ENCODE measurements at regions of chrX and their contacts with region 1.

Region 1: GRCh38 chrX:43557792-43558191 is 98.3 kb upstream of the MAOA start:
- DNase-seq: peak; percentile 46 to 61 (median 54)
- H3K4me3 ChIP-seq: no peak overlapping the region
- H3K4me3 Mint-ChIP-seq: peak overlapping the region in 2 of 8 donors; percentile 27 to 47
- H3K27ac ChIP-seq: no peak overlapping the region
- H3K27ac Mint-ChIP-seq: no peak overlapping the region
- H3K4me1 ChIP-seq: peaks cover 4% of the 10 kb centered on the region
- H3K4me1 Mint-ChIP-seq: peaks cover 0 to 1% (median 0%) of the 10 kb centered on the region in 4 donors
- H3K27me3 ChIP-seq: no peaks in the 10 kb centered on the region
- H3K27me3 Mint-ChIP-seq: no peaks in the 10 kb centered on the region

Region 2: GRCh38 chrX:41781502-41781901 is 1776.3 kb before region 1 on chrX:
- CTCF ChIA-PET with region 1: interaction called, 12 read pairs
- POLR2A ChIA-PET with region 1: no interaction called
- intact Hi-C with region 1: loop called (anchors 1 kb)
- DNase-seq: peak in 4 of 5 donors; percentile 28 to 38 (median 32)
- H3K4me3 ChIP-seq: no peak overlapping the region
- H3K4me3 Mint-ChIP-seq: no peak overlapping the region
- H3K27ac ChIP-seq: no peak overlapping the region
- H3K27ac Mint-ChIP-seq: peak overlapping the region in 2 of 7 donors; percentile 2 to 7
- H3K4me1 ChIP-seq: peaks cover 12% of the 10 kb centered on the region
- H3K4me1 Mint-ChIP-seq: peaks cover 7 to 10% (median 8%) of the 10 kb centered on the region in 4 donors
- H3K27me3 ChIP-seq: no peaks in the 10 kb centered on the region
- H3K27me3 Mint-ChIP-seq: no peaks in the 10 kb centered on the region

Region 3: GRCh38 chrX:41796577-41796976 is 1761.2 kb before region 1 on chrX:
- CTCF ChIA-PET with region 1: interaction called, 11 read pairs
- POLR2A ChIA-PET with region 1: no interaction called
- intact Hi-C with region 1: loop called (anchors 5 kb)
- DNase-seq: peak in 3 of 5 donors; percentile 2 to 37 (median 6)
- H3K4me3 ChIP-seq: no peak overlapping the region
- H3K4me3 Mint-ChIP-seq: peak overlapping the region in 2 of 8 donors; percentile 15 to 63
- H3K27ac ChIP-seq: no peak overlapping the region
- H3K27ac Mint-ChIP-seq: peak overlapping the region in 3 of 7 donors; percentile 3 to 68 (median 5)
- H3K4me1 ChIP-seq: peaks cover 45% of the 10 kb centered on the region
- H3K4me1 Mint-ChIP-seq: peaks cover 19 to 45% (median 33%) of the 10 kb centered on the region in 4 donors
- H3K27me3 ChIP-seq: no peaks in the 10 kb centered on the region
- H3K27me3 Mint-ChIP-seq: no peaks in the 10 kb centered on the region

Region 4: GRCh38 chrX:42948723-42949657 is 608.8 kb before region 1 on chrX:
- CTCF ChIA-PET with region 1: no interaction called
- POLR2A ChIA-PET with region 1: no interaction called
- intact Hi-C with region 1: loop called (anchors 5 kb)
- DNase-seq: peak; percentile 29 to 58 (median 35)
- H3K4me3 ChIP-seq: no peak overlapping the region
- H3K4me3 Mint-ChIP-seq: peak overlapping the region; percentile 18 to 79 (median 42)
- H3K27ac ChIP-seq: peak overlapping the region; percentile 49
- H3K27ac Mint-ChIP-seq: peak overlapping the region; percentile 87 to 95 (median 90)
- H3K4me1 ChIP-seq: peaks cover 77% of the 10 kb centered on the region
- H3K4me1 Mint-ChIP-seq: peaks cover 44 to 77% (median 64%) of the 10 kb centered on the region in 4 donors
- H3K27me3 ChIP-seq: no peaks in the 10 kb centered on the region
- H3K27me3 Mint-ChIP-seq: no peaks in the 10 kb centered on the region

Region 5: GRCh38 chrX:43349363-43349762 is 208.4 kb before region 1 on chrX:
- CTCF ChIA-PET with region 1: interaction called, 8 read pairs
- POLR2A ChIA-PET with region 1: no interaction called
- intact Hi-C with region 1: loop called (anchors 5 kb)
- DNase-seq: peak; percentile 29 to 47 (median 38)
- H3K4me3 ChIP-seq: no peak overlapping the region
- H3K4me3 Mint-ChIP-seq: no peak overlapping the region
- H3K27ac ChIP-seq: no peak overlapping the region
- H3K27ac Mint-ChIP-seq: no peak overlapping the region
- H3K4me1 ChIP-seq: no peaks in the 10 kb centered on the region
- H3K4me1 Mint-ChIP-seq: peaks cover 4 to 15% (median 5%) of the 10 kb centered on the region in 4 donors
- H3K27me3 ChIP-seq: no peaks in the 10 kb centered on the region
- H3K27me3 Mint-ChIP-seq: no peaks in the 10 kb centered on the region

Region 6: DNA sequence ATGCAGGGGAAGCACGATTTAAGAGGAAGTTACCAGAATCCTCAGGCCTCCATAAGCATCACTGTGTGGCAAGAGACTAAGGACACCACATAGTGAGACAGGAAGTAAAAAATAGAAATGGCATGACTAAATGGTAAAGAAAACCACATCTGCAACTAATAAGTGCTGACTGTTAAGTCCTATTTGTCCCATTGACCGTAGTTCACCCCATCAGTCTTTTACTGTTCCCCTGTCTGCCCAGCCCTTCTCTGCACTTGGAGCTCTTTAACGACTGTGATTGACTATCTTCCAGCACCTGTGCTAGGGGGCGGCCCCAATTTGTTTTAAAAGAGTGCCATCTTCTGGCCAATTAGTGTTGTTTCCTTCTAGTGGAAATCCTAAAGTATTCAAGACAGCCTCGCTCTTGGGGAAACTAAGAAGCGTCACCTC is 192.5 kb after region 1 on chrX:
- CTCF ChIA-PET with region 1: interaction called, 15 read pairs
- POLR2A ChIA-PET with region 1: no interaction called
- intact Hi-C with region 1: loop called (anchors 1 kb)
- DNase-seq: peak; percentile 50 to 60 (median 54)
- H3K4me3 ChIP-seq: no peak overlapping the region
- H3K4me3 Mint-ChIP-seq: no peak overlapping the region
- H3K27ac ChIP-seq: no peak overlapping the region
- H3K27ac Mint-ChIP-seq: no peak overlapping the region
- H3K4me1 ChIP-seq: no peaks in the 10 kb centered on the region
- H3K4me1 Mint-ChIP-seq: peaks cover 0 to 5% (median 2%) of the 10 kb centered on the region in 4 donors
- H3K27me3 ChIP-seq: no peaks in the 10 kb centered on the region
- H3K27me3 Mint-ChIP-seq: no peaks in the 10 kb centered on the region

Measured in CD4-positive, alpha-beta memory T cell (primary cell).